Transverse colon (tissue), 4 donors: ENCODE measurements at regions of chr7 and their contacts with region 1.

Region 1: DNA sequence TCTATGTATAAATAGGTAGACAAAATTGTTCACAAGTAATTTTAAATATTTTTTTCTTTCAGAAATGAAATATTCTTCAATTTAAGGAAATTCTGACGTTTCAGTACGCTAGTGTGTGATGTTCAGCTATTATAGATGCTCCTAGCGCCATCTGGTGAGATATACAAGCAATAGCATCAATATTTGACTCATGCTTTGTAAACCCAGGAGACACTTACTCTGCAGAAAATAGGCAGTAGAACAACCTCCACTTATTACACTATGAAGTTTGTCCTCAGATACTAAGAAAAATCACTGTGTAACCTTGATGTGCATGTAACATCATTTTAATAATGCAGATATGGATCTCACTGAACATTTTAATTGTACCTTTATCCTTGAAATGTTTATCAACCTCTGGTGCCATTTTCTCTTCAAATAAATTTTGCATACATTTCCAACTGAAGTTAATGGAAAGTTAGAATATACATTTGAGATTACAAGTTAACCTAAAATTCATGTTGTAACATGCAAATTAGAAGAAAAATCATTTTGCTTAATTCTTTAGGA is 151.5 kb upstream of the FAM3C start:
- DNase-seq: no peak
- H3K4me3 ChIP-seq: no peak overlapping the region
- H3K27ac ChIP-seq: no peak overlapping the region
- H3K4me1 ChIP-seq: peaks cover 0 to 6% (median 0%) of the 10 kb centered on the region in 4 donors
- H3K27me3 ChIP-seq: no peaks in the 10 kb centered on the region
- CTCF ChIP-seq: peak; percentile 71 to 81 (median 76)
- EP300 ChIP-seq: no peak
- POLR2A ChIP-seq: no peak

Region 2: DNA sequence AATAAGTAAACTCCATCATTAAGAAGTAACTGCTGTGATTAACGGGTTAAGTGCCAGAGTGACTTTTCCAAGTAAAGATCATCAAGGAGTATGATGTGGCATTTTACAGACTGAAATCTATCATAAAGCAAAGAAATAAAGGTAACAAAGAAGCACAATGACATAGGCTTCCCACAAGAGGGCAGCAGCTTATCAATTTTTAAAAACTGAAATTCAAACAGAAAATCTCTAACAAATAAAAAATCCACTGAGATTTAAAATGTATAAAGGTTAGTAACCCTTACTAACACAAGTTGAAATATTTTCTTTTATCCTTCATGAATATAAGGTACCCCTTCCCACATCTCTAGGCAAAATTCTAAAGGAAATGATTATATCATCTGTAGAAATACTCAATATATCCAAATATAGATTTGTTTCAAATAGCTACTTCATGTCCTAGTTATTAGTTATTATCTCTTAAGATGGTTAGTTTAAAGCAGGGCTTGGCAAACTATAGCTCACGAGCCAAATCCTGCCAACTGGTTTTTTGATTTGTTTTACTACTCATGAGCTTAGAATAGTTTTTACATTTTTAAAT is 180.7 kb before region 1 on chr7:
- in situ Hi-C with region 1: loop called (anchors 5 to 10 kb)
- intact Hi-C with region 1: loop called (anchors 5 kb)
- DNase-seq: no peak
- H3K4me3 ChIP-seq: no peak overlapping the region
- H3K27ac ChIP-seq: no peak overlapping the region
- H3K4me1 ChIP-seq: peaks cover 0 to 18% (median 5%) of the 10 kb centered on the region in 4 donors
- H3K27me3 ChIP-seq: no peaks in the 10 kb centered on the region
- CTCF ChIP-seq: peak; percentile 72 to 85 (median 78)
- EP300 ChIP-seq: no peak
- POLR2A ChIP-seq: no peak

Region 3: DNA sequence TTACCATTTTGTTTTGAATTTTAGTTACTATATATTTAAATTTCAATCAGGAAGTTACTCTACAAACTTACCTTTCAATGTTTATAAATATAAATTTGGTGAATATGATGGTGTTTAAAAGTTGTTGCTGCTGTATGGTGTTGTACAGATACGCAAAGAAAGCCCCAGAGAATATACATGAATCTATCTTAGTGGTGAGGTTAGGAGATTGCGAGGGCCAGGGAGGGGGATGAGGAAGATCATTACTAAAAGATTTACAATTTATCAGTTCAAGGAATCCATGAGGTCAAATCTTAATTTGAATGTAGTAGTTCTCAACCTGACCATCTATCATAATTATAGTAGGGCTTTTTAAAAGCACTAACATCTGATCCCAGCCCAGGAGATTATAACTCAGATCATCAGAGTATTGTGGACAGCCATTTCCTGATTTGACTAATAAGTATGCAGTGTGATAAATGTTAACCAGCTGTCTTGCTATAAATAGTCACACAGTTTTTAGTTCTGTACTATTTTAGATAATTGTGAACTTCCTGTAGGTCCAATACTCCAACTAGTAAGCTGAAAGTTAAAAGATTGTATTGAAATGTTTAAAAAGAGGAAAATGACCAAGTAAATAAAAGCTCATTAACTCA is 175.1 kb before region 1 on chr7:
- in situ Hi-C with region 1: loop called (anchors 5 to 10 kb)
- intact Hi-C with region 1: loop called (anchors 5 kb)
- DNase-seq: no peak
- H3K4me3 ChIP-seq: no peak overlapping the region
- H3K27ac ChIP-seq: peak overlapping the region in 1 of 4 donors; percentile 38
- H3K4me1 ChIP-seq: peaks cover 0 to 18% (median 5%) of the 10 kb centered on the region in 4 donors
- H3K27me3 ChIP-seq: no peaks in the 10 kb centered on the region
- CTCF ChIP-seq: no peak
- EP300 ChIP-seq: no peak
- POLR2A ChIP-seq: no peak